Tibial artery (tissue), 4 donors: ENCODE measurements at regions of chr21 and their contacts with region 1.

Region 1: GRCh38 chr21:36319765-36320420 is at the start of gene MORC3:
- DNase-seq: peak; percentile 97 to 99
- H3K4me3 ChIP-seq: peak within 1 kb of the TSS; percentile 81 to 88
- H3K27ac ChIP-seq: peak within 1 kb of the TSS; percentile 95 to 98
- H3K4me1 ChIP-seq: peaks cover 0 to 40% (median 26%) of the 10 kb centered on the region in 4 donors
- H3K27me3 ChIP-seq: no peaks in the 10 kb centered on the region
- CTCF ChIP-seq: no peak

Region 2: GRCh38 chr21:36060159-36060921 is 259.6 kb before region 1 on chr21 and contains the start of gene SETD4:
- intact Hi-C with region 1: loop called (anchors 10 kb)
- DNase-seq: peak; percentile 89 to 95
- H3K4me3 ChIP-seq: peak within 1 kb of the TSS; percentile 74 to 83
- H3K27ac ChIP-seq: peak within 1 kb of the TSS; percentile 94
- H3K4me1 ChIP-seq: peaks cover 0 to 16% (median 10%) of the 10 kb centered on the region in 4 donors
- H3K27me3 ChIP-seq: no peaks in the 10 kb centered on the region
- CTCF ChIP-seq: no peak

Region 3: GRCh38 chr21:36156339-36156814 is 163.5 kb before region 1 on chr21:
- intact Hi-C with region 1: loop called (anchors 1 kb)
- DNase-seq: peak; percentile 99 to 100
- H3K4me3 ChIP-seq: peak overlapping the region; percentile 94 to 97
- H3K27ac ChIP-seq: peak overlapping the region; percentile 77 to 85
- H3K4me1 ChIP-seq: peaks cover 0 to 18% (median 11%) of the 10 kb centered on the region in 4 donors
- H3K27me3 ChIP-seq: no peaks in the 10 kb centered on the region
- CTCF ChIP-seq: no peak